MCF 10A (cell line): ENCODE measurements at regions of chr1 and their contacts with region 1.

Region 1: DNA sequence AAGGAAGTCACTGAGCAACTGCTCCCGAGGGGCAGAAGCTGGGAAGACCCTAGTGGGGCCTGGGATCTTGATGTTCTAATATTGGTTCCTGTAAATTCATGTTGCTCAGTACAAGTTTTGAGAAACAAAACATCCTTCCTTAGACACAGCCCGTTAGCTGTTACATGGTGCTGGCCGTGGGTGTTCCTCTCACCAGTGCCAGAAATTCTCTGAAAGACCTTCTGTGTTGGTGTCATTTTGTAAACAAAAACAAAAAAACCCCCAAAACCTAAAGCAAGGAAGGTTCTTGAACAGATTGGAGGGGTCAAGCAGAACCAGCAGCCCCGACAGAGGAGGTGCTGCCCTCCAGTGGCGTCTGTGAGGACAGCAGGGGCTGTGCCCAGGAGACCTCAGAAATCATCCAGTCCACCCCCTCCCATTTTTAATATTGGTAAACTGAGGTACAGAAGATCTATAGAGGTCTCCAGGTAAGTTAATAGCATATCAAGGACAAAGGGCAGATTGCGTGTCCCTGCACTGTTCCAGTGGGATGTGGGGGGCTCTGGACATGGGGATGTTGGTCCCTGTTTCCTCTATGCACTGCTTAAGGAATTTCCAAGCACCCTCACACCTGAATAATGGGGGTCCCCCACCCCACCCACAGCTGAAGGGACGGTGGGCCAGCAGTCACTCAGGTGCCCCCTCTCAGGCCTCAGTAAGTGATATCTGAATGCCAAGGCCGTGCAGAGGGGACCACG is 38.2 kb downstream of the SLC2A7 start:
- DNase-seq: peak; percentile 59
- H3K4me3 Mint-ChIP-seq: no peak overlapping the region
- H3K27ac Mint-ChIP-seq: no peak overlapping the region
- H3K4me1 Mint-ChIP-seq: peaks cover 12% of the 10 kb centered on the region
- H3K27me3 Mint-ChIP-seq: no peaks in the 10 kb centered on the region
- CTCF ChIP-seq: peak; percentile 94

Region 2: DNA sequence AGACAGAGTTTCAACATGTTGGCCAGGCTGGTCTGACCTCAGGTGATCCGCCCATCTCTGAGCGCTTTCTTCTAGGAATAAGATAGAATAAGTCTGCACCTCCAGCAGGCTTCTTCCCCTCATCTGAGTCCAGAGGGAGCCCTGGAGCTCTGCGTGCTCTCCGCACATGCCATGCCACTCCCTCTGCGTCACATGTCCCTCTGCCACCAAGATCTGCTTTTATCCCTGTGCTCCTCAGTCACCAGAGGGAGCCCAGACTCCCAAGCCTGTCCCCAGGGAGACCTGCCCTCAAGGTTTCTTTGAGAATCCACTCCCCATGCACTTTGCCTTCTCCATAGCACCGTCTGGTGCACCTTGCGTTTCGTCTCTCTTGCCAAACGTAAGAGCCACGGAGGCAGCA is 1989.8 kb before region 1 on chr1:
- CTCF ChIA-PET with region 1: no interaction called
- POLR2A ChIA-PET with region 1: no interaction called
- intact Hi-C with region 1: no loop called
- DNase-seq: no peak
- H3K4me3 Mint-ChIP-seq: no peak overlapping the region
- H3K27ac Mint-ChIP-seq: no peak overlapping the region
- H3K4me1 Mint-ChIP-seq: no peaks in the 10 kb centered on the region
- H3K27me3 Mint-ChIP-seq: peaks cover 80% of the 10 kb centered on the region
- CTCF ChIP-seq: no peak

Region 3: GRCh38 chr1:8858888-8859706 is 129.0 kb before region 1 on chr1:
- CTCF ChIA-PET with region 1: interaction called, 5 read pairs
- POLR2A ChIA-PET with region 1: interaction called, 3 read pairs
- intact Hi-C with region 1: loop called (anchors 5 kb)
- DNase-seq: peak; percentile 65
- H3K4me3 Mint-ChIP-seq: no peak overlapping the region
- H3K27ac Mint-ChIP-seq: peak overlapping the region; percentile 66
- H3K4me1 Mint-ChIP-seq: no peaks in the 10 kb centered on the region
- H3K27me3 Mint-ChIP-seq: no peaks in the 10 kb centered on the region
- CTCF ChIP-seq: peak; percentile 45

Region 4: GRCh38 chr1:8910914-8911313 is 77.1 kb before region 1 on chr1:
- CTCF ChIA-PET with region 1: interaction called, 112 read pairs
- POLR2A ChIA-PET with region 1: interaction called, 3 read pairs
- intact Hi-C with region 1: no loop called
- DNase-seq: peak; percentile 44
- H3K4me3 Mint-ChIP-seq: no peak overlapping the region
- H3K27ac Mint-ChIP-seq: peak overlapping the region; percentile 75
- H3K4me1 Mint-ChIP-seq: peaks cover 24% of the 10 kb centered on the region
- H3K27me3 Mint-ChIP-seq: no peaks in the 10 kb centered on the region
- CTCF ChIP-seq: no peak

Region 5: GRCh38 chr1:8926707-8927694 is 61.0 kb before region 1 on chr1:
- CTCF ChIA-PET with region 1: interaction called, 15 read pairs
- POLR2A ChIA-PET with region 1: no interaction called
- intact Hi-C with region 1: no loop called
- DNase-seq: no peak
- H3K4me3 Mint-ChIP-seq: no peak overlapping the region
- H3K27ac Mint-ChIP-seq: no peak overlapping the region
- H3K4me1 Mint-ChIP-seq: peaks cover 5% of the 10 kb centered on the region
- H3K27me3 Mint-ChIP-seq: no peaks in the 10 kb centered on the region
- CTCF ChIP-seq: no peak

Region 6: DNA sequence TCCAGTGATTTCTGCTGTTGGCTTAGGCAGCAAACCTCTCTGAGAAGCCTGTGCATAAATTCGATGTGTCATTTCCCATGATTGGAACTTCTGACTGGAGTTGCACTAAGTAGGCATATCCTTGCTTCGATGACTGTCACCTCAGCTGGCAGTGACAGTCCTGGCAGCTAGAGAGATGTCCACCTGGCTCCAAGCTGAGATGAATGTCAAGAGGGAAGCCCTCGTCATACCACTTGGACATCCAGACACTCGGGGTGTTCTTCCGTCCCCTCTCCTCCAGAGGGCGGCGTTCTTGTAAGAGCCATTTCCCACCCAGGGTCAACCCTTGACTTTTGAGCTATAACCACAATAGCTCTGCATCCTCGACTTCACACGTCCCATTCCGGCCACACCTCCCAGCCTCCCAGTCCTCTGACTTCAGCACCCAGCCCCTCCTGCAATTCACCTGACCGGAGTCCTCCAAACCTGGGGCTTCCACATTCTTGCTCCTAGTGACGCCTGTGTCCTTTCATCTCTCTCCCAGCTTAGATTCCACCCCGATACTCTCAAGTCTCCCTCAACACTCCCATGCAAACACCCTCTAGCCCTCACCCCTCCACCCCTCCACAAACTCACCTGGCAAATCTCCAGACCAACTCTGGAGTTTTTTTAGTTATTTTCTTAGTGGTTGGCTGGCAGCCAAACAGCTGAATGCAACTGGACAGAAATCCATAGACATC is 25.1 kb before region 1 on chr1:
- CTCF ChIA-PET with region 1: interaction called, 14 read pairs
- POLR2A ChIA-PET with region 1: interaction called, 3 read pairs
- intact Hi-C with region 1: no loop called
- DNase-seq: peak; percentile 81
- H3K4me3 Mint-ChIP-seq: no peak overlapping the region
- H3K27ac Mint-ChIP-seq: no peak overlapping the region
- H3K4me1 Mint-ChIP-seq: no peaks in the 10 kb centered on the region
- H3K27me3 Mint-ChIP-seq: no peaks in the 10 kb centered on the region
- CTCF ChIP-seq: peak; percentile 44

Region 7: GRCh38 chr1:9004700-9005394 is 16.8 kb after region 1 on chr1:
- CTCF ChIA-PET with region 1: interaction called, 16 read pairs
- POLR2A ChIA-PET with region 1: interaction called, 3 read pairs
- intact Hi-C with region 1: loop called (anchors 1 kb)
- DNase-seq: peak; percentile 78
- H3K4me3 Mint-ChIP-seq: no peak overlapping the region
- H3K27ac Mint-ChIP-seq: no peak overlapping the region
- H3K4me1 Mint-ChIP-seq: no peaks in the 10 kb centered on the region
- H3K27me3 Mint-ChIP-seq: no peaks in the 10 kb centered on the region
- CTCF ChIP-seq: peak; percentile 87

Region 8: DNA sequence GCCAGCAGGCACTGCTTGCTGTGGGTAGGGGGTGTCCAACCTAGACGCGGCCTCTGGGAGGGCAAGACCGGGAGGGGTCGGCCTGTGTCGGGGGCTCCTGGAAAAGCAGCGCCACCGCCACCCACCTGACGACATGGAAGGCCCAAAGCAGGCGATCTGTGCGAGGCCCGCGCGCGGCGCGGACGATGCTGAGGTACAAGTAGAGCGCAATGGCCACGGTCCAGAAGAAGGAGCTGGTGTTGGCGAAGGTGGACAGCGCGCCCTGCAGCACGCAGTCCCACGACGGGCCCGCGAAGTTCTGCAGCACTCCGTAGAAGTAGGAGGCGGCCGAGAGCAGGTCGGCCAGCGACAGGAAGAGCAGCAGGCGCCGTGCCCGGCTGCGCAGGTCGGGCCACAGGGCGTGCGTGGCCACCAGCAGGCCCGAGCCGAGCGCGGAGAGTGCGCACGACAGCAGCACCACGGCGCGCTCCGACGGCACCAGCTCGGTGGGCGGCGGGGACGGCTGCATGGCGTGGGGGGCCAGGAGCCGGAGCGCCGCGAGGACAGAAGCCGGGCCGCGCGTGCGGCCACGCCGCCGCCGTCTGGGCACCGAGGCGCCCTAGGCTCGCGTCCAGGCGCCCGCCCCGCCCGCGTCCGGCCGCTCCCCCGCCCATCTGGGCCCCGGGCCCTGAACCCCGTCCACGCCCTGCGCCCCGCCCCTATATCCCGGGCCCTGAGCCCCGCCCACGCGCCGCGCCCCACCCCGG is 140.6 kb after region 1 on chr1 and contains the start of gene GPR157:
- CTCF ChIA-PET with region 1: no interaction called
- POLR2A ChIA-PET with region 1: no interaction called
- intact Hi-C with region 1: no loop called
- DNase-seq: peak; percentile 87
- H3K4me3 Mint-ChIP-seq: peak within 1 kb of the TSS; percentile 89
- H3K27ac Mint-ChIP-seq: peak within 1 kb of the TSS; percentile 88
- H3K4me1 Mint-ChIP-seq: peaks cover 10% of the 10 kb centered on the region
- H3K27me3 Mint-ChIP-seq: no peaks in the 10 kb centered on the region
- CTCF ChIP-seq: no peak
- total RNA-seq, gene GPR157: 8.1 and 12.7 TPM in 2 replicates